CD8-positive, alpha-beta memory T cell (primary cell): ENCODE measurements at regions of chr7 and their contacts with region 1.

Region 1: GRCh38 chr7:105387621-105388372 is 924 bp downstream of the SRPK2 start:
- DNase-seq: peak; percentile 30 to 69 (median 40)
- H3K4me3 ChIP-seq: peak overlapping the region; percentile 58
- H3K4me3 Mint-ChIP-seq: peak overlapping the region; percentile 79 to 95 (median 91)
- H3K27ac ChIP-seq: peak overlapping the region; percentile 38
- H3K27ac Mint-ChIP-seq: peak overlapping the region; percentile 25 to 95 (median 86)
- H3K4me1 ChIP-seq: peaks cover 14% of the 10 kb centered on the region
- H3K4me1 Mint-ChIP-seq: peaks cover 33 to 52% (median 49%) of the 10 kb centered on the region in 3 donors
- H3K27me3 ChIP-seq: no peaks in the 10 kb centered on the region
- H3K27me3 Mint-ChIP-seq: no peaks in the 10 kb centered on the region

Region 2: GRCh38 chr7:105352018-105352612 is 35.7 kb before region 1 on chr7:
- CTCF ChIA-PET with region 1: interaction called, 9 read pairs
- POLR2A ChIA-PET with region 1: interaction called, 10 read pairs
- DNase-seq: peak; percentile 29 to 80 (median 76)
- H3K4me3 ChIP-seq: no peak overlapping the region
- H3K4me3 Mint-ChIP-seq: peak overlapping the region; percentile 36 to 88 (median 78)
- H3K27ac ChIP-seq: no peak overlapping the region
- H3K27ac Mint-ChIP-seq: peak overlapping the region; percentile 77 to 96 (median 95)
- H3K4me1 ChIP-seq: peaks cover 78% of the 10 kb centered on the region
- H3K4me1 Mint-ChIP-seq: peaks cover 55 to 74% (median 72%) of the 10 kb centered on the region in 3 donors
- H3K27me3 ChIP-seq: no peaks in the 10 kb centered on the region
- H3K27me3 Mint-ChIP-seq: no peaks in the 10 kb centered on the region

Region 3: DNA sequence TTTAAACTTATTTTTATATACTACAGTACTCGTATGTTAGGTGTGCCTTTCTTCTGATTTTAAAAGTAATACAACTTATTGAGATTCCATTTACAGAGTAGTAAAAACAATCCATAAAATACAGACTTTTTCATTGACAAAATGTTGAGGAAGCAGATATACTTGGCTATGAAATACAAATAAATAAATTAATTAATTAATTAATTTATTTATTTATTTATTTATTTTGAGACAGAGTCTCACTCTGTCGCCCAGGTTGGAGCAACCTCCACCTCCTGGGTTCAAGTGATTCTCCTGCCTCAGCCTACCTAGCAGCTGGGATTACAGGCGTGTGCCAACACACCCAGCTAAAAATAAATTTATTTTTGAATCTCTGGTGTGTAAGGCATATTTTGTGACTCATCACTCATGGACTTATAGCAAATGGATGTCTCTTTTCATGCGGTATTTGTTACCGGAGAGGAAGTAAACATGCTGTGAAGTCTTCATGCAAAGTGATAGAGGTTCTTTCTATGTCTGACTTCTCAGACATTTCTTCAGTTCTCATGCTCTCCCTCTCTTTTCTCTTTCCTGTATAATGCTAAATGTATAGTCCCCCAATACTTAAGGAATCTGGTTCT is 21.1 kb after region 1 on chr7:
- CTCF ChIA-PET with region 1: no interaction called
- POLR2A ChIA-PET with region 1: no interaction called
- DNase-seq: no peak
- H3K4me3 ChIP-seq: no peak overlapping the region
- H3K4me3 Mint-ChIP-seq: no peak overlapping the region
- H3K27ac ChIP-seq: no peak overlapping the region
- H3K27ac Mint-ChIP-seq: no peak overlapping the region
- H3K4me1 ChIP-seq: no peaks in the 10 kb centered on the region
- H3K4me1 Mint-ChIP-seq: no peaks in the 10 kb centered on the region
- H3K27me3 ChIP-seq: no peaks in the 10 kb centered on the region
- H3K27me3 Mint-ChIP-seq: no peaks in the 10 kb centered on the region

Region 4: GRCh38 chr7:105487579-105488571 is 100.1 kb after region 1 on chr7:
- CTCF ChIA-PET with region 1: no interaction called
- POLR2A ChIA-PET with region 1: no interaction called
- DNase-seq: peak in 1 of 5 donors; percentile 13
- H3K4me3 ChIP-seq: no peak overlapping the region
- H3K4me3 Mint-ChIP-seq: no peak overlapping the region
- H3K27ac ChIP-seq: no peak overlapping the region
- H3K27ac Mint-ChIP-seq: peak overlapping the region in 4 of 8 donors; percentile 23 to 52 (median 36)
- H3K4me1 ChIP-seq: no peaks in the 10 kb centered on the region
- H3K4me1 Mint-ChIP-seq: peaks cover 3 to 10% (median 7%) of the 10 kb centered on the region in 3 donors
- H3K27me3 ChIP-seq: no peaks in the 10 kb centered on the region
- H3K27me3 Mint-ChIP-seq: no peaks in the 10 kb centered on the region